Activated CD8-positive, alpha-beta T cell treated with anti-CD3 and anti-CD28 coated beads for 36 hours (primary cell): ENCODE measurements at regions of chr21 and their contacts with region 1.

Region 1: GRCh38 chr21:33162436-33162951 is 67.2 kb upstream of the IFNAR2 start:
- DNase-seq: no peak
- ATAC-seq: no peak
- H3K4me3 Mint-ChIP-seq: no peak overlapping the region
- H3K27ac Mint-ChIP-seq: no peak overlapping the region
- H3K4me1 Mint-ChIP-seq: no peaks in the 10 kb centered on the region
- H3K27me3 Mint-ChIP-seq: peaks cover 8% of the 10 kb centered on the region
- CTCF ChIP-seq: no peak

Region 2: GRCh38 chr21:33109574-33110339 is 52.7 kb before region 1 on chr21:
- CTCF ChIA-PET with region 1: no interaction called
- POLR2A ChIA-PET with region 1: no interaction called
- intact Hi-C with region 1: loop called (anchors 10 kb)
- DNase-seq: peak; percentile 29
- ATAC-seq: peak; percentile 53
- H3K4me3 Mint-ChIP-seq: no peak overlapping the region
- H3K27ac Mint-ChIP-seq: no peak overlapping the region
- H3K4me1 Mint-ChIP-seq: peaks cover 3% of the 10 kb centered on the region
- H3K27me3 Mint-ChIP-seq: peaks cover 28% of the 10 kb centered on the region
- CTCF ChIP-seq: no peak